ENCODE measurements at regions of chr7 and their contacts with region 1.

Region 1: DNA sequence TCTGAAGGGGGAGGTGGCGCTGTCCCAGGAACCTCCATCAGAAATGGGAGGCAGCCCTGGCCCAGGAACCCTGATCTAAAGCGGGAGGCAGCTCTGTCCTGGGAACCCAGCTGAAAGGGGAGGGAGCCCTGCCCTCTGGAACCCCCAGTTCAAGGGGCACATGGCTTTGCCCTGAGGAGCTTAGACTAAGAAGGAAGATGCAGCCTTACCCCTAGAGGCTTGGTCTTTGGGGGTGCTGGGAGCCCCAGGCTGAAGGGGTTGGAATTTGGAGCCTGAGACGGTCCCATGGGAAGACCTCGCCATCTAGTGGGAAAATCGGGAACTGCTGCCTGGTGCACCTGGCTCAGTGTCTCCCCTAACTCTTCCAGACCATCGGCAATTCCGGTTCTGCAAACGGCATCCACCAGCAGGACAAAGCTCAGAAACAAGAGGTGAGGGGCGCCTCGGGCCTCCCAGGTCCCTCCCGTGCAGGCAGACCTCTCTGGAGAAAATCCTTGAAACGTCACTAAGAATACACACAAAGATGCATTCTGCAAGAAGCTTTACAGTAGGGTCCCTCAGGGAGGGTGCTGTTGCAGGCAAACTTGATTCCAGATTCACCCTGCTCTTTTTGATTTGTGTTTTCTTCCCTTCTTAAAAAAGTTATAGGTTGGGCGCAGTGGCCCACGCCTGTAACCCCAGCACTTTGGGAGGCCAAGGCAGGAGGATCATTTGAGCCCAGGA is 52.4 kb upstream of the GTF2IRD1 start:
- DNase-seq: no peak
- H3K4me3 ChIP-seq: no peak overlapping the region
- CTCF ChIP-seq: peak; percentile 96

Region 2: DNA sequence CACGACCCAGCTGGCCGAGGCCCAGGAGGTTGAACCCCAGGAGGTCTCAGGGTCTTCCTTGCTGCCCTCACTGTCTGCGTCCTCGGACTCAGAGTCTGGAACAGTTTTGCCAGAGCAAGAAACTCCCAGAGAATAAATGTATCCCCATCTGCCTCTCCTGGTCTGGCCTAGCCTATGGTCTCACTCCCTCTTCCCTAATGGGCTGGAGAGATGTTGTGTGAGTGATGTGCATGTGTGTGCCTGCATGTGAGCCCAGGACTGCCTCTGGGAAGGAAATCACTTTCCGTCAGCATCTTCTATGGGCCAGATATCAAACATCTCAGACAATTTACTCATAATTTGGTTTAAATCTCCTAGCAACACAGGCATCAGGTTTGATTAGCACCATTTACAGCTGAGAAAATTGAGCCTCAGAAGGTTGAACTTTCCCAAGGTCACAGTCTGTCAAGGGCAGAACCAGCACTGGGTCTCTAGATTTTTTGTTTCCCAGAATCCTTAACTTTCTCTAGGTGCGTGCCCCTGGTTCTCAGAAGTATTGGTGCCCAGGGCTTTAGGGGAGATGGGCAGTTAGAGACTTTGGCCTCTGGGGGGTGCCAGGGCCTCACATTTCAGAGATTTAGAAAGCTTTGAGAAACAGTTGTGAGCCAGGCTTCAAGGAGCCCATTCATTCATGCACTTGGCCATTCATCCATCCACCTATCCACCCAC is 535.4 kb before region 1 on chr7:
- CTCF ChIA-PET with region 1: interaction called, 11 read pairs
- POLR2A ChIA-PET with region 1: no interaction called
- DNase-seq: no peak
- H3K4me3 ChIP-seq: no peak overlapping the region
- CTCF ChIP-seq: peak; percentile 74

Region 3: GRCh38 chr7:74074770-74075169 is 326.5 kb before region 1 on chr7:
- CTCF ChIA-PET with region 1: interaction called, 68 read pairs
- POLR2A ChIA-PET with region 1: no interaction called
- DNase-seq: no peak
- H3K4me3 ChIP-seq: no peak overlapping the region
- CTCF ChIP-seq: no peak

Region 4: GRCh38 chr7:74206589-74207120 is 194.6 kb before region 1 on chr7:
- CTCF ChIA-PET with region 1: interaction called, 809 read pairs
- POLR2A ChIA-PET with region 1: interaction called, 3 read pairs
- DNase-seq: no peak
- H3K4me3 ChIP-seq: peak overlapping the region; percentile 38
- CTCF ChIP-seq: peak; percentile 86

Region 5: GRCh38 chr7:74284781-74285259 is 116.5 kb before region 1 on chr7:
- CTCF ChIA-PET with region 1: interaction called, 17 read pairs
- POLR2A ChIA-PET with region 1: no interaction called
- DNase-seq: no peak
- H3K4me3 ChIP-seq: no peak overlapping the region
- CTCF ChIP-seq: no peak

Region 6: GRCh38 chr7:74379938-74380337 is 21.4 kb before region 1 on chr7:
- CTCF ChIA-PET with region 1: interaction called, 84 read pairs
- POLR2A ChIA-PET with region 1: no interaction called
- DNase-seq: no peak
- H3K4me3 ChIP-seq: no peak overlapping the region
- CTCF ChIP-seq: no peak

Region 7: DNA sequence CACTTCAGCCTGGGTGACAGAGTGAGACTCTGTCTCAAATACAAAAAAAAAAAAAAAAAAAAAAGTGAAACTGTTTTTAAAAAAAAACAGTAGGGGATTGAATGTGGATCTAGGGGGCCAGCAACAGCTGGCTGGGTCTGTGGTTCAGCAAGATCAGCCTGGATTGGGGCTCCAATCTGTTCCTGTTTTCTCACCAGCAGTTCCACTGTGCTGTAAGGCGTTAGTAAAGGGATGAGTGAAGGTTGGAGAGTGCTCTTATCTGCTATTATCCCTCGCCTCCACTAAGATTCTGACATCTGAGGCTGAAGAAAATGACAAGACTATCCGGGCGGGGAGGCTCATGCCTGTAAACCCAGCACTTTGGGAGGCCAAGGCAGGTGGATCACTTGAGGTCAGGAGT is 10.8 kb after region 1 on chr7:
- CTCF ChIA-PET with region 1: interaction called, 36 read pairs
- POLR2A ChIA-PET with region 1: no interaction called
- DNase-seq: no peak
- H3K4me3 ChIP-seq: no peak overlapping the region
- CTCF ChIP-seq: no peak